Endothelial cell of umbilical vein (primary cell): ENCODE measurements at regions of chr2 and their contacts with region 1.

Region 1: DNA sequence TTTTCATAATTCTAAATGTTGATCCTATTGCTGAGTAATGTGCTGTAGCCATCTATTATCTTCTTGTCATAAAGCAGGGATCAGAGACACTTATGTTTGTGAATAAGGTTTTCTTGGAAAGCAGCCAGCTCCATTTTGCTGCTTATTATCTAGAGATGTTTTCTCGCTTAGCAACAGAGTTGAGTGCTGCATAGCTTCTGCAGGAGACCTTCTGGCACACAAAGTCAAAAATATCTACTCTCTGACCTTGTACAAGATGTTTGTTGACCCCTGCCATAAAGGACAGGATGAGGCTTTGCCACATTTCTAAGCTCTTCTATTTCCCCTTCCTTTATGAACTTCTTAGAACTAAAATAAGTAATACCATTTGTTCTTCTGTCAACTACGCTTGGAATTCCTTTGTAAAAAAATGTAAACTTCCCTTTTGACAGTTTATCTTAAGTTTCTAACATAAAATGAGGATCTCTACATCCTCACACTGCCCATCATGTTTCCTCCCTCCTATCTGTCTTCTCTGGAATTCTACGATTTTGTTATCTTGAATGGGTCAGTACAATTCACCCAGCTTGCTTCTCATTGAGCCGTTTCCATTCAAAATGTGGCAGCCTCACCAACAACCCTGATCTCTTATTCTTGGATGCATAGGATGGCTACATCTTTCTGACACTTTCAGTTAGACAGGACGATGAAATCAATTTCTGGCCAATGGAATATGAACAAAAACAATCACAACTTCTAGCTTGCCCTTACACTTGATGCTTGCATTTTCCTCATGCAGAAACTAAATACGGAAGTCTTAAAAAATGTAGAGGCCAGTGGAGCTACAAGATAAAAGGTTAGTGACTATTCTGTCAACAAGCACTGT is 1377.0 kb downstream of the SUCLG1 start:
- DNase-seq: peak; percentile 100
- H3K4me3 ChIP-seq: peak overlapping the region in 1 of 3 experiments; percentile 28
- H3K27ac ChIP-seq: peak overlapping the region; percentile 94
- H3K4me1 ChIP-seq: peaks cover 25% of the 10 kb centered on the region
- H3K27me3 ChIP-seq: no peaks in the 10 kb centered on the region
- CTCF ChIP-seq: no peak
- POLR2A ChIP-seq: peak; percentile 67

Region 2: GRCh38 chr2:82675186-82675585 is 406.9 kb before region 1 on chr2:
- CTCF ChIA-PET with region 1: no interaction called
- POLR2A ChIA-PET with region 1: no interaction called
- dilution Hi-C with region 1: no loop called
- intact Hi-C with region 1: loop called (anchors 1 kb)
- DNase-seq: peak; percentile 72
- H3K4me3 ChIP-seq: no peak overlapping the region
- H3K27ac ChIP-seq: peak overlapping the region; percentile 59
- H3K4me1 ChIP-seq: peaks cover 8% of the 10 kb centered on the region
- H3K27me3 ChIP-seq: no peaks in the 10 kb centered on the region
- CTCF ChIP-seq: no peak
- POLR2A ChIP-seq: no peak

Region 3: DNA sequence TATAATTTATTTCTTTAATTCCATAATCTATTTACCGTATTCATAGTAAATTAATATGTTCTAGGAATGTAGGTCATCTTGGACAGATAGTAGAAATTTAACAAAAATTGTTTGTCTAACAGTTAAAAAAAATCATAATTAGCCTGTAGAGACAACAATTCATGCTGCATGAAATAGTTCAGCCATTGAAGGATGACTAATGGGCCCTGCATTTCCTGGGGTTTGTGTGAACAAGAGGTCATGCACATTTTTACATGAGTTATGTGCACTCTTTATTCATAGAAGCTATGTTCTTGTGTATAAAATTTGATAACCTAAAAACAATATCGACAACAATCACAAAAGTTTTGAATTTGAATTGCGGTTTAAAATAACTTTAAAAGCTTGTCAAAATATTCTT is 286.6 kb before region 1 on chr2:
- CTCF ChIA-PET with region 1: no interaction called
- POLR2A ChIA-PET with region 1: interaction called, 4 read pairs
- dilution Hi-C with region 1: no loop called
- intact Hi-C with region 1: loop called (anchors 1 kb)
- DNase-seq: peak; percentile 87
- H3K4me3 ChIP-seq: peak overlapping the region in 1 of 3 experiments; percentile 55
- H3K27ac ChIP-seq: peak overlapping the region; percentile 93
- H3K4me1 ChIP-seq: peaks cover 21% of the 10 kb centered on the region
- H3K27me3 ChIP-seq: no peaks in the 10 kb centered on the region
- CTCF ChIP-seq: no peak
- POLR2A ChIP-seq: peak; percentile 22

Region 4: GRCh38 chr2:83069724-83070123 is 12.3 kb before region 1 on chr2:
- CTCF ChIA-PET with region 1: interaction called, 12 read pairs
- POLR2A ChIA-PET with region 1: interaction called, 5 read pairs
- dilution Hi-C with region 1: no loop called
- intact Hi-C with region 1: loop called (anchors 2 kb)
- DNase-seq: peak; percentile 58
- H3K4me3 ChIP-seq: no peak overlapping the region
- H3K27ac ChIP-seq: no peak overlapping the region
- H3K4me1 ChIP-seq: peaks cover 5% of the 10 kb centered on the region
- H3K27me3 ChIP-seq: no peaks in the 10 kb centered on the region
- CTCF ChIP-seq: no peak
- POLR2A ChIP-seq: no peak

Region 5: DNA sequence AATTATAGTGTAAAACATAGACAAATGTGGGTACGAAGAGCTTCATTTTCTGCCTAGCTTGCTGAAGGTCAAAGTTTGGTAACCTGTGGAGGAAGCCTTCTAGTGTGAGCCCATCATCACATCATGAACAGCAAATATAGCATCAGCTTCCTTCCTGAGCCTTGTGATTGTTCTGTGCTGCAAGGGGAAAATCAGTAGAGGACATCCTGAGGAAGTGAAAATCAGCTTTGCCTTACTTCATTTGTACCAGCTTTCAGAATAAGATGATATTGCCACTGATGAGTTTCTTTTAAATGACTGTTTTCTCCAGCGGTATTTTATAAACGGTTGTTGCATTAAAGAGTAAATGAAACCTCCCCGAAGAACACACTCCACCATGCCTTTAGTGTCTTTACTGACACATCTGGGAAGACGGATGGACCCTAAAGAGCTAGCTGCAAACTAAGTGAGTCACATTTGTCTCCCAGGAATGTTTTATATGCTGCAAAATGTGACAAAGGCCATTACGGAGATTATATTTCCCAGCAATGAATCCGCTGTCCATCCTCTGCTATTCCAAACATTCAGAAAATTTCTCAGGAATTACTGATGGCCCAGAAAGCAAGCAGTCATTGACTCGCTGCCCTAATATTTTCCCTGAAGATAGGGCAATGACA is 104.2 kb after region 1 on chr2:
- CTCF ChIA-PET with region 1: interaction called, 4 read pairs
- POLR2A ChIA-PET with region 1: interaction called, 3 read pairs
- dilution Hi-C with region 1: no loop called
- intact Hi-C with region 1: loop called (anchors 1 kb)
- DNase-seq: peak; percentile 84
- H3K4me3 ChIP-seq: peak overlapping the region in 2 of 3 experiments; percentile 5 to 41
- H3K27ac ChIP-seq: peak overlapping the region; percentile 84
- H3K4me1 ChIP-seq: peaks cover 24% of the 10 kb centered on the region
- H3K27me3 ChIP-seq: no peaks in the 10 kb centered on the region
- CTCF ChIP-seq: no peak
- POLR2A ChIP-seq: no peak